Heart right ventricle (tissue), 16 donors: ENCODE measurements at regions of chr5 and their contacts with region 1.

Region 1: DNA sequence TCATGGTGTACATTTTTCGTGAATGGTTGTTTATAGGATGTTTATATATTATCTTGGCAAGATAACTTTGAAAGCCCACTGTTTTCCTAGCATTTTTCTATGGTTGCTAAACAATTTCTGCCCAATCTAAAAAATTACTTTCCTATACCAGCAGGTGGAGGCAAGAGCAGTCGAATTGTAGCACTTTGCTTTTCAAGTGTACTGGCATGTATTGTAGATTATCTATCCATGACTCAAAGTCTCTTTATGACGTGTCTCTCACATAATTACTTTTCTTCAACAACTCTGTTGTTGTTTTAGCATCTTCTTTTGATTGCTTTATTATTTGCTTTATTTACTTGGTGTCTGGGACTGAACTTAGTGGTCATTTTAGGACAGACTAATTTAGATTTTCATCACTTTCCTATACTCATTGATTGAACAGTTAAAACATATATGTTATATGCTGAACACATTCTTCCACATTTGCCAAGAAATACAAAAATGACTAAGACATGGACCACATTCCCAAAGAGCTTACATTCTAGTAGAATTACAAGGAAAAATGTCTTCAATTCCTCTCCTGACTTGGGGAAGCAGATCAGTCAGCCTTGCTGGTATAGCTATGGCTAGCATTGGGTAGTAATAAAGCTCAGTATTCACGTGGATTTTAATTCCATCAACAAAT is 20.7 kb downstream of the NLN start:
- DNase-seq: no peak
- ATAC-seq: peak in 1 of 8 donors; percentile 62
- H3K4me3 ChIP-seq: no peak overlapping the region
- H3K27ac ChIP-seq: no peak overlapping the region
- H3K4me1 ChIP-seq: peaks cover 0 to 4% (median 0%) of the 10 kb centered on the region in 9 donors
- H3K27me3 ChIP-seq: no peaks in the 10 kb centered on the region
- CTCF ChIP-seq: peak in 7 of 9 donors; percentile 49 to 67 (median 60)

Region 2: DNA sequence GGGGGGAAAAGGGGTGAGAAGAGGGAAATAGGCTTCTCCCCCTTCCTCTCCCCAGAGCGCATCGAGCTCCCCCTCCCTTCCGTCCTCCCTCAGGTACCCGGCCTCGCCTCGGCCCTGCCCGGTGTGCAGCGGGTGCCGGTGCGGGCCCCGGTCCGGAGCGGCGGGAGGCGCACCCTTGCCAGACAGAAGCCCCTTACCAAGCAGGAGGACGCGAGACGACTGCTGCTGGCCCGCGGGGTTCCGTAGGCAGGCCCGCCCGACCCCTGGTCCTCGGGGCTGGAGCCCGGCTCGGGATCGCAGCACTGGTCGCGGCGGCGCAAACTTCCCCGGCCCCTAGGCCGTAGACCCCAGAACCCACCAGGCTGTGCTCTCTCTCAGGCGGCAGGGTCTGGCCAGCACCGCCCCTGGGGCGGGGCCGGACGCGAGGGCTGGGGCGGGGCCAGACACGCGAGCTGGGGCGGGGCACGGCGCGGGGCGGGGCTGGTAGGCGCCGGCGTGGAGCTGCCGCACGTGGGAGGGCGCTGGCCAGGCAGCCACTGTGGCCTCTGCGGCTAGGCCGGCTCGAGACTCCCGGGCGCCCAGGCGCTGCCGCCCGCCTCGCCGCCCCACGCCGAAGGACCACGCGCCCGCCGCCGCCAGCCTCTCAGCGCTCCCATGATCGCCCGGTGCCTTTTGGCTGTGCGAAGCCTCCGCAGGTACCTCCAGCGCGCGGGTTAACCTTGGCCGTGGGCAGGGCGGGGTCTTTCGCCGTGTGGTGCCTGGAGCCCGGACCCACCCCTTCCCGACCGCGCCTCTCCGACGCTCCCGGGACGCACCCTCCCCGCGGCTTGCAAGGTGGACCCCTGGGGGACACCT is 20.8 kb before region 1 on chr5 and contains the starts of genes NLN and SGTB:
- intact Hi-C with region 1: loop called in 1 of 10 experiments (anchors 1 kb)
- DNase-seq: peak; percentile 83 to 91
- ATAC-seq: peak; percentile 96 to 99 (median 97)
- H3K4me3 ChIP-seq: peak within 1 kb of the TSS; percentile 70 to 100 (median 97)
- H3K27ac ChIP-seq: peak within 1 kb of the TSS in 9 of 10 donors; percentile 63 to 90 (median 79)
- H3K4me1 ChIP-seq: peaks cover 4 to 49% (median 16%) of the 10 kb centered on the region in 9 donors
- H3K27me3 ChIP-seq: no peaks in the 10 kb centered on the region
- CTCF ChIP-seq: no peak
- total RNA-seq, gene NLN: 10.9 to 17.4 (median 14.4) TPM
- total RNA-seq, gene SGTB: 5.1 to 9.7 (median 6.5) TPM

Region 3: DNA sequence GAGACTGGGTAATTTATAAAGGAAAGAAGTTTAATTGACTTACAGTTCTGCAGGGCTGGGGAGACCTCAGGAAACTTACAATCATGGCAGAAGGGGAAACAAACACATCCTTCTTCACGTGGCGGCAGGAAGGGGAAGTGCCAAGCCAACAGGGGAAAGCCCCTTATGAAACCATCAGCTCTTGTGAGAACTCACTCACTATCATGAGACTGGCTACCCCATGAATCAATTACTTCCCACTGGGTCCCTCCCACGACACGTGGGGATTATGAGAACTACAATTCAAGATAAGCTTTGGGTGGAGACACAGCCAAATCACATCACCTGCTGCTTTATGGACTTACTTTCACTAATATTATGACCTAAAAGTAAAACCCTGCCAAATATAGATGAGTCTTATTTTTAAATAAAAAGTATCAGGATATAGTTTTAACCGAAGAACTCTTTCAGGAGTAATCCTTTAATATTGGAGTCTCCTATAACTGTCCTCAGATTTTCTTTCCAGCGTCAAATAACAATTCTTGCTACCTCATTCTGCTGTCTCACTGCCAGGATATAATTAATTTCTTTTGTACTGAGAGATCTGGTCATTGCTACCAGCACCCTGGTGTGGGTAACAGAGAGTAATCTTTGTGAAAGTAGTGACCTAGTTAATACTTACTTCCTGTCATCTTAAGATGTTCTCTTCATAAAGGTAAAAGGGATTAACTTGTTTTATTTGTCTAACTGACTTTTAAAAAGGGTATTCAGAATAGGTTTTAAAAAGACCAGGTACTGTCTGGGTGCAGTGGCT is 47.9 kb after region 1 on chr5:
- intact Hi-C with region 1: no loop called
- DNase-seq: no peak
- ATAC-seq: no peak
- H3K4me3 ChIP-seq: no peak overlapping the region
- H3K27ac ChIP-seq: no peak overlapping the region
- H3K4me1 ChIP-seq: no peaks in the 10 kb centered on the region
- H3K27me3 ChIP-seq: no peaks in the 10 kb centered on the region
- CTCF ChIP-seq: no peak

Region 4: DNA sequence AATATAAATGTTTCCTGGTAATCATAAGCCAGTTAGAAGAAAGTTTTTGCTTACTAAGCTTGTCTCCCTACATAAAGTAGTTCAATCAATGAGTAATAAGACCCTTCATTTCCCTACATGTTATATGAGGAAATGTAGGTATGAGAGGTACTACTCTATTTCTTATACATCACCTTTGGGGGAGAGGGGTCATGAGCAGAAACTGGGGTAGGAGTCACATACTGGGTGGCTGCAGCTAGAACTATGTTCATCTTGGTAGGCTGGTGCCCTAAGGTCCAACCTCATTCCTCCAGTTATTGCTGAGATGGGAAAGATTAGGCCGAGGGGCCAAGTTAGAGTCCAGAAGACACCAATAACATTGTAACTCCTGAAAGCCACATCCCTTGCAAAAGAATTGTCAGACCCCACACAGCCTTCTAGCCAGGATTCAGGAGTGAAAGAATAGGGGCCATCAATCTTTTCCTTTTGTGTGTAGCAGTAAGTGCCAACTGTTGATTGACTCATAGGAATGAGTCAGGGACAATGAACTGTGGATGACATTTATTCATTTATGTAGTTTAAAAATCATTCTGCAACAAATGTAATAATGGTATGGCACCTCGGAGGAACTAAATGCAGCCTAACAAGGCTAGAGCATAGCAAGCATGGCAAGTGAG is 379.8 kb after region 1 on chr5:
- intact Hi-C with region 1: loop called in 1 of 10 experiments (anchors 10 kb)
- DNase-seq: no peak
- ATAC-seq: no peak
- H3K4me3 ChIP-seq: no peak overlapping the region
- H3K27ac ChIP-seq: no peak overlapping the region
- H3K4me1 ChIP-seq: peaks cover 0 to 8% (median 0%) of the 10 kb centered on the region in 9 donors
- H3K27me3 ChIP-seq: no peaks in the 10 kb centered on the region
- CTCF ChIP-seq: no peak